ENCODE measurements at regions of chr15 and their contacts with region 1.

Region 1: DNA sequence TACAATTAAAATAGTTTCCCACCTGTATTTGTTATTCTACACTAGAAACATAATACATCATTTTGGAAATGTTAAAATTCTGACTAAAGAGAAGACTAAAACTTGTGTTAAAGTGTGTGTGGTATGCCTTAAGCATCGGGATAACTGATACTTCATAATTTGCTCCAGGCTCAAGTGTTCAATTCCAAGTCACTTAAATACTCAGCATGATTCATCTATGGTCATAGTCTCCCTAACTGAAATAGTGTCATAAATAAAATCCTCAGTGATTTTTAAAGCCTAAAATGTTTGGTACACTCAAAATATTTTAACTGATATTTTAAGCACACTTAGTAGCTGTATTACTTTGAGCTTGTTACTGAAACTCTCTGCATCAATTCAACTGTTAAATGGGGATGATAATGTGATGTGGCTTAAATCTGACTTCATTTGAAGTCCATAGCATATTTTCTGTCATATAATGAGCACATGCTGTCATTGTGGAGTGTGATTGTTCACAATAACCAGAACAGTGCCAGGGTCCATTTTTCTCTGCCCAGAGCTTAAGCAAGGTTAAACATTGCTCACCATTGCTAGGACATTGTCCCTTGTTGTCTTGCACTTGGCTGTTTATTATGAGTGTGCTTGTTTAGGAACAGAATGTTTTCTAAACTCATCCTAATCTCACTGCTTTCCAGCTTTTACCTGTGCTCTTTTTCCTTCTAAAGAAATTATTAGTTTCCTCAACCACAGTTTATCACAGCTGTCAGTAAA is 122.2 kb downstream of the KLHL25 start:
- DNase-seq: peak in 1 of 2 donors; percentile 26
- ATAC-seq: peak; percentile 76 to 89
- H3K4me3 ChIP-seq: no peak overlapping the region
- H3K27ac ChIP-seq: peak overlapping the region; percentile 62 to 83 (median 75)
- H3K4me1 ChIP-seq: peaks cover 33 to 48% of the 10 kb centered on the region in 2 donors
- H3K27me3 ChIP-seq: no peaks in the 10 kb centered on the region
- CTCF ChIP-seq: no peak
- POLR2A ChIP-seq: no peak

Region 2: GRCh38 chr15:85624291-85624801 is 48.2 kb before region 1 on chr15:
- in situ Hi-C with region 1: no loop called
- intact Hi-C with region 1: loop called (anchors 5 kb)
- DNase-seq: no peak
- ATAC-seq: peak in 1 of 2 donors; percentile 13
- H3K4me3 ChIP-seq: peak overlapping the region in 3 of 4 donors; percentile 8 to 67 (median 10)
- H3K27ac ChIP-seq: peak overlapping the region; percentile 81 to 86 (median 82)
- H3K4me1 ChIP-seq: peaks cover 78 to 84% of the 10 kb centered on the region in 2 donors
- H3K27me3 ChIP-seq: no peaks in the 10 kb centered on the region
- CTCF ChIP-seq: no peak
- POLR2A ChIP-seq: no peak

Region 3: DNA sequence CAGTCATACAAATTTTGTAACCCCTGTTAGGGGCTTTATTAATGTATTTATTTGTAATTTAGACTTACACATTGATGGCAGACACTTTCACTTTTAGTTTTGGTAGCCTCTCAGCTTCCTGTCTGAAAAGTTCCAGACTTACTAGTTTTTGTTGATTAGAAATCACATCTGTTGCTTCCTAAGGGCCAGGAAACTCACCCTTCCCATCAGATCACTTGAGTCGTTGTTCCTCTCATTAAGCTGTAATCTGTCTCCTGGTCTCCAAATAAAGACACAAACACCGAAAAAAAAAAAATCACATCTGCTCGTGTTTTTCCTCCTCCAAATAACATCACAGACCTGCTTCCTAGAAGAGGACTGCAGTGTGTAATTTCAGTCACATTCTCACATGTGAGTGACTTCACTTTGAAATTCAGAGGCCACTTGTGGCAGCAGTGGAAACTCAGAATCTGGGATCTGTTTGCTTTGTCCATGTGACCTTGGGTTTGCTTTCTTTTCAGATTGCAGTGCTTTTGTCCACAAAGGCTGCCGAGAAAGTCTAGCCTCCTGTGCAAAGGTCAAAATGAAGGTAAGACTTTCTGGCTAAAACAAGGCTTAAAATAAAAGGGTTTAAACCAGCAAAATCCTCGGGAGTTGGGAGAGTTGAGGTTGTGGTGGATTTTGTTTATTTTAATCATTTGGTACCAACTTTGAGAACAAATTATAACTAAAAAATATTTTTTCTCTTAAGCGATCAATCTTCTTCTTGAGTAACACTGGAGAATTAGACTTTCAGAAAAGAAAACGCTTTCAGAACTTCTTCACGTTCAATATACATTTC is 35.2 kb after region 1 on chr15:
- in situ Hi-C with region 1: no loop called
- intact Hi-C with region 1: no loop called
- DNase-seq: peak in 1 of 2 donors; percentile 56
- ATAC-seq: peak; percentile 76 to 84
- H3K4me3 ChIP-seq: peak overlapping the region; percentile 24 to 40 (median 29)
- H3K27ac ChIP-seq: peak overlapping the region; percentile 82 to 86 (median 84)
- H3K4me1 ChIP-seq: peaks cover 63% of the 10 kb centered on the region in 2 donors
- H3K27me3 ChIP-seq: no peaks in the 10 kb centered on the region
- CTCF ChIP-seq: peak in 1 of 5 experiments; percentile 9
- POLR2A ChIP-seq: peak in 1 of 2 donors; percentile 47

Measured in gastrocnemius medialis (tissue), 4 donors.